ENCODE measurements at regions of chr7 and their contacts with region 1.

Region 1: DNA sequence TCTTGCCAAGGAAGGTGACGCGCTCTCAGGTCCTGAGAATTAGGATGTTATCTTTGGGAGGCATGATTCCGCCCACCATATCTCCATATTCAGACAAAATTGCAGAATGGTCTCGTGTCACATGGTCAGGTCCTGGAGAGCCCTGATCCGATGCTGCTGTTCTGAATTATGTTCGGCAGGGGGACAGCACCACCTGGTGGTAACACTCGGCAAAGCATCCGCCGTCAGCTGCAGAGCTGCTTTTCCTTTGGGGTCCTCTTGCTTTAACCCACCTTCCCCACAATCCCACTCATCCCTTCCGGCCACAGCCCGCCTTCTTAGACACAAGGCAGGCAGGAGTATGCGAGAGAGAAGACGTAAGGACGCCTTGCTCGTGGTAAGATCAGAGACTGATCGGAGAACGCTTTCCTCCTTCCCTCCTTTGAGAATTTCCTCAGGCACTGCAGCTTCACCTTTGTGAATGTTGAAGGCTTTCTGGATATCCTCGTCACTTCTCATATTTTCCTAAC is 327.8 kb upstream of the C7orf33 start:
- DNase-seq: peak; percentile 84
- H3K4me3 ChIP-seq: peak overlapping the region; percentile 29 to 51
- H3K27ac ChIP-seq: no peak overlapping the region; a peak in 1 of 4 replicates
- H3K4me1 ChIP-seq: peaks cover 0 to 15% of the 10 kb centered on the region in 2 experiments; a peak in 2 of 4 replicates
- H3K27me3 ChIP-seq: no peaks in the 10 kb centered on the region
- CTCF ChIP-seq: peak; percentile 99
- EP300 ChIP-seq: no peak
- RAD21 ChIP-seq: peak; percentile 97

Region 2: GRCh38 chr7:147968046-147968610 is 294.6 kb before region 1 on chr7:
- CTCF ChIA-PET with region 1: no interaction called
- POLR2A ChIA-PET with region 1: no interaction called
- DNase-seq: no peak
- H3K4me3 ChIP-seq: no peak overlapping the region
- H3K27ac ChIP-seq: no peak overlapping the region
- H3K4me1 ChIP-seq: no peaks in the 10 kb centered on the region
- H3K27me3 ChIP-seq: no peaks in the 10 kb centered on the region
- CTCF ChIP-seq: no peak
- EP300 ChIP-seq: no peak
- RAD21 ChIP-seq: no peak

Region 3: GRCh38 chr7:148242294-148242801 is 20.4 kb before region 1 on chr7:
- CTCF ChIA-PET with region 1: interaction called, 56 read pairs
- POLR2A ChIA-PET with region 1: no interaction called
- DNase-seq: peak; percentile 67
- H3K4me3 ChIP-seq: peak overlapping the region in 1 of 2 experiments; percentile 16; a peak in 1 of 4 replicates
- H3K27ac ChIP-seq: no peak overlapping the region
- H3K4me1 ChIP-seq: no peaks in the 10 kb centered on the region; a peak in 1 of 4 replicates
- H3K27me3 ChIP-seq: no peaks in the 10 kb centered on the region
- CTCF ChIP-seq: peak; percentile 98
- EP300 ChIP-seq: no peak
- RAD21 ChIP-seq: peak; percentile 92

Region 4: DNA sequence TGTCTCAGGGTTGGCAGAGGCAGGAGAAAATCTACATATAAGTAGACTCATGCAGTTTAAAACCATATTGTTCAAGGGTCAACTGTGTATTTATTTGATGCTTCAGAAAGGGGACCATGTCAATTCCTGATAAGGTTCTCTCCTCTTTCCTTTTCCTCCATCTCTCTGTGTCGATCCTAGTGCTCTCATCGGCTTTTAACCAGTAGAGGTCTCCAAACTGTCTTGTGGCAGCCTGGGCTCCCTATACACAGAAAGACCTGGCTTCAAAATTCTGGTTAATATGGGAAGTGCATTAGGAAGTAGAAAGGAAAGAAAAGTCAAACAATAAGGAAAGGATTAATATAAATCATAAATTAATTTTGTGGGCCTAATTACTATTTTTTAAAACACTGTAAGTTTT is 23.4 kb after region 1 on chr7:
- CTCF ChIA-PET with region 1: interaction called, 61 read pairs
- POLR2A ChIA-PET with region 1: no interaction called
- DNase-seq: peak; percentile 65
- H3K4me3 ChIP-seq: no peak overlapping the region; a peak in 1 of 4 replicates
- H3K27ac ChIP-seq: no peak overlapping the region
- H3K4me1 ChIP-seq: no peaks in the 10 kb centered on the region; a peak in 1 of 4 replicates
- H3K27me3 ChIP-seq: no peaks in the 10 kb centered on the region
- CTCF ChIP-seq: peak; percentile 74
- EP300 ChIP-seq: no peak
- RAD21 ChIP-seq: peak; percentile 74

Region 5: DNA sequence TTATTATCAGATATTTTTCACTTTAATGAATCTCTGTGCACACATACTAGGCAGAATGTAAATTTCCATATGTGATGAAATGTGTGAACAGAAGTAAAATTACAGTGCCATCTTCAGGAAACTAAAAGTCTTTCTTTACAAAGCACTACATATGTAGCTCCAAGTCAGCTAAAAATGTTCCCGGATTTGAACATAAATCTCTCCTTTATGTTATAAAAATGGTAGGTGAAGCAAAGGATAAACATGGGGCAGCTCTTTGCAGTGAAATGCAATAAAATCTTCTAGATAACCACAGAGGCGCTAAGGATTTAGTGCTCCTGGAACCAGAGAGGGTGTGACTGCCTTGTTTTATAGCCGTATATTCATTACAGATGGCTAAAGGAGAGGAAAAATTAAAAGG is 222.8 kb after region 1 on chr7:
- CTCF ChIA-PET with region 1: interaction called, 21 read pairs
- POLR2A ChIA-PET with region 1: no interaction called
- DNase-seq: no peak
- H3K4me3 ChIP-seq: no peak overlapping the region
- H3K27ac ChIP-seq: no peak overlapping the region
- H3K4me1 ChIP-seq: peaks cover 0 to 10% of the 10 kb centered on the region in 2 experiments; a peak in 2 of 4 replicates
- H3K27me3 ChIP-seq: no peaks in the 10 kb centered on the region
- CTCF ChIP-seq: peak; percentile 57
- EP300 ChIP-seq: no peak
- RAD21 ChIP-seq: peak; percentile 60

Region 6: DNA sequence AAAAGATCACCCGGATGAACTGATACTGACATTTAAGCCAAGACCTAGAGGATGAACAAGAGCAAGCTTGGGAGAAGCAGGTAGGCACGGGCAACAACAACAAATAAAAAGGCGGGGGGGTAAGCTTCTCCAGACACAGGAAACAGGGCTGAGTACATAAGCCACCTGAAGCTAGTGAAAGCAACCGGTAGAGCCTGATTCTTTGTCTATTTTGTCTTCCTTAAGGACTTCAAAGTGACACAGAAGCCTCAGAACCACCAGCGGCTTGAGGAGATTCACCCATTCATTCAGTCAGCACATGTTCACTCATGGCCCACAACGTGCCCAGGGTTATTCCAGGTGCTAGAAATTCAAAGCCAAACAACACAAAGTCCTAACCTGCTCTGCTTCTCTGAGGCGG is 258.4 kb after region 1 on chr7:
- CTCF ChIA-PET with region 1: interaction called, 32 read pairs
- POLR2A ChIA-PET with region 1: no interaction called
- DNase-seq: no peak
- H3K4me3 ChIP-seq: no peak overlapping the region
- H3K27ac ChIP-seq: no peak overlapping the region
- H3K4me1 ChIP-seq: no peaks in the 10 kb centered on the region
- H3K27me3 ChIP-seq: no peaks in the 10 kb centered on the region; the same call in 1 of the 2 replicates
- CTCF ChIP-seq: no peak
- EP300 ChIP-seq: no peak
- RAD21 ChIP-seq: no peak